ENCODE measurements at regions of chr9 and their contacts with region 1.

Region 1: GRCh38 chr9:15422372-15423230 is at the start of gene SNAPC3:
- DNase-seq: peak; percentile 93 to 95
- ATAC-seq: peak; percentile 99 to 100 (median 100)
- H3K4me3 ChIP-seq: peak within 1 kb of the TSS; percentile 68 to 99 (median 90)
- H3K27ac ChIP-seq: peak within 1 kb of the TSS; percentile 84 to 98 (median 93)
- H3K4me1 ChIP-seq: peaks cover 3 to 50% (median 42%) of the 10 kb centered on the region in 9 donors
- H3K27me3 ChIP-seq: no peaks in the 10 kb centered on the region
- CTCF ChIP-seq: peak in 1 of 9 donors; percentile 4
- total RNA-seq, gene SNAPC3: 26.0 to 41.8 (median 37.5) TPM

Region 2: GRCh38 chr9:15211160-15211814 is 211.3 kb before region 1 on chr9:
- intact Hi-C with region 1: loop called in 7 of 10 experiments (anchors 5 to 10 kb)
- DNase-seq: peak in 1 of 2 donors; percentile 81
- ATAC-seq: peak in 7 of 8 donors; percentile 55 to 83 (median 65)
- H3K4me3 ChIP-seq: no peak overlapping the region
- H3K27ac ChIP-seq: peak overlapping the region in 1 of 10 donors; percentile 22
- H3K4me1 ChIP-seq: peaks cover 0 to 10% (median 7%) of the 10 kb centered on the region in 9 donors
- H3K27me3 ChIP-seq: no peaks in the 10 kb centered on the region
- CTCF ChIP-seq: peak; percentile 80 to 96 (median 92)

Region 3: GRCh38 chr9:15295761-15296405 is 126.7 kb before region 1 on chr9:
- intact Hi-C with region 1: loop called in 2 of 10 experiments (anchors 10 kb)
- DNase-seq: no peak
- ATAC-seq: peak; percentile 25 to 78 (median 59)
- H3K4me3 ChIP-seq: peak overlapping the region in 9 of 10 donors; percentile 29 to 59 (median 48)
- H3K27ac ChIP-seq: peak overlapping the region; percentile 59 to 93 (median 84)
- H3K4me1 ChIP-seq: peaks cover 3 to 54% (median 16%) of the 10 kb centered on the region in 9 donors
- H3K27me3 ChIP-seq: no peaks in the 10 kb centered on the region
- CTCF ChIP-seq: no peak

Region 4: GRCh38 chr9:15306757-15307534 is 115.7 kb before region 1 on chr9 and contains the start of gene TTC39B:
- intact Hi-C with region 1: loop called in 4 of 10 experiments (anchors 1 to 10 kb)
- DNase-seq: peak; percentile 93
- ATAC-seq: peak; percentile 98 to 99 (median 98)
- H3K4me3 ChIP-seq: peak within 1 kb of the TSS; percentile 68 to 98 (median 81)
- H3K27ac ChIP-seq: peak within 1 kb of the TSS; percentile 22 to 91 (median 78)
- H3K4me1 ChIP-seq: peaks cover 0 to 24% (median 4%) of the 10 kb centered on the region in 9 donors
- H3K27me3 ChIP-seq: peaks cover 0 to 10% (median 0%) of the 10 kb centered on the region in 7 donors
- CTCF ChIP-seq: peak in 5 of 9 donors; percentile 10 to 41 (median 24)
- total RNA-seq, gene TTC39B: 1.1 to 4.3 (median 1.6) TPM

Region 5: DNA sequence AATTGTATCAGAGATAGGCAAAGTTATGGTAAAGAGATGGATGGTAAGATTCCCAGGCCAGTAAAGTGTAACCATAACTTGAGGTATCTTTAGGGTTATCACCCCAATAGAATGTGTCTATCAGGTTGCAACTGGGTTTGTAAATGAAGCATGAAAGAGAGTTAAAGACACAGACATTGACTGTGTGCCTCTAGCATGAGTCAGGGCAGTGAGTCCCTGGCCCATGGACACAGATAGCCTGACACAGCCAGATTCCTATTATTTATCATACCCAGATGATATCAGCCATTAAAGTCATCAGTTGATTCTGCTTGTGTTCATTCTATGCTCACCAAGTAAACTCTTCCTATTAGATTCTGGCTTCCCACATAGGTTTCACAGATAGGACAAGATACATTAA is 33.4 kb before region 1 on chr9:
- intact Hi-C with region 1: no loop called
- DNase-seq: no peak
- ATAC-seq: no peak
- H3K4me3 ChIP-seq: no peak overlapping the region
- H3K27ac ChIP-seq: no peak overlapping the region
- H3K4me1 ChIP-seq: no peaks in the 10 kb centered on the region
- H3K27me3 ChIP-seq: no peaks in the 10 kb centered on the region
- CTCF ChIP-seq: no peak

Region 6: DNA sequence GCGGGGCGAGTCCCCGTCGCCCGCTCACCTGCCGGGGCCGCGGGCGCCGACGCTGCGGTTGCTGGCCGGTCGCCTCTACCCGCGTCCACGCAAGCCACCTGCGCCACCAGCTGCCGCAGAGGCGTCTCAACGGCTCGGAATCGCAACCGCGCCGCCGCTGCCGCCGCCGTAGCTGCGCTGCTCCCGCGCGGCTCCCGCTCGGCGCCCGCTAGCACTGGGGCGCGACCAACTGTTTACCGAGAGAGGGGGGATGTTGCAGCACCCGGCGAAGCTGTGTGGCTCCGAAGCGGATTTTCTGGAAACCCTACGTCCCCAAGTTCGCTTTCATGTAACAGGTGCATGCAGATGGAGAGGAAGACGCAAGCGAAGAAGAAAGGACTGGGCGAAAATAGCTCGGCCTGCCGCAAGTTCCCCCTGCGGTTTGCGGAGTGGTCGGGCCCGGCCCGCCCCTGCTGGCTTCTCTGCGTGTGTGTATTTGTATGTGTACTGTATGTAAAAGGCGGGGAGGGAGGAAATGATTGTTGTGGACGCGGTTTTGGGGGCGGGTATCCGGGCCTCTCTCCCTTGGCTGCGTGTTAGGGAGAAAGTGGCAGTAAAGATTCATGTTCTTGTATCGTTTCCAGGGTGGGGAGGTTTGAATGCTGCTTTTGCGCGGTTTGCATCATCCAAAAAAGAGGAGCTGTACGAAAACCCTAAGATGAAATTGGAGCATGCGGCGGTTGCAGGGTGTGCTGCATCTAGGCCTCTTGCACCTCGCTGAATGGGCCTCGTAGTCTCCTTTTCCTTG is 88.4 kb after region 1 on chr9 and contains the start of gene PSIP1:
- intact Hi-C with region 1: loop called in 2 of 10 experiments (anchors 5 to 10 kb)
- DNase-seq: peak; percentile 81
- ATAC-seq: peak; percentile 92 to 97 (median 94)
- H3K4me3 ChIP-seq: peak within 1 kb of the TSS; percentile 69 to 98 (median 96)
- H3K27ac ChIP-seq: peak within 1 kb of the TSS; percentile 87 to 98 (median 94)
- H3K4me1 ChIP-seq: peaks cover 0 to 32% (median 18%) of the 10 kb centered on the region in 9 donors
- H3K27me3 ChIP-seq: no peaks in the 10 kb centered on the region
- CTCF ChIP-seq: peak in 2 of 9 donors; percentile 11 to 16
- total RNA-seq, gene PSIP1: 16.3 to 31.7 (median 21.3) TPM

Region 7: DNA sequence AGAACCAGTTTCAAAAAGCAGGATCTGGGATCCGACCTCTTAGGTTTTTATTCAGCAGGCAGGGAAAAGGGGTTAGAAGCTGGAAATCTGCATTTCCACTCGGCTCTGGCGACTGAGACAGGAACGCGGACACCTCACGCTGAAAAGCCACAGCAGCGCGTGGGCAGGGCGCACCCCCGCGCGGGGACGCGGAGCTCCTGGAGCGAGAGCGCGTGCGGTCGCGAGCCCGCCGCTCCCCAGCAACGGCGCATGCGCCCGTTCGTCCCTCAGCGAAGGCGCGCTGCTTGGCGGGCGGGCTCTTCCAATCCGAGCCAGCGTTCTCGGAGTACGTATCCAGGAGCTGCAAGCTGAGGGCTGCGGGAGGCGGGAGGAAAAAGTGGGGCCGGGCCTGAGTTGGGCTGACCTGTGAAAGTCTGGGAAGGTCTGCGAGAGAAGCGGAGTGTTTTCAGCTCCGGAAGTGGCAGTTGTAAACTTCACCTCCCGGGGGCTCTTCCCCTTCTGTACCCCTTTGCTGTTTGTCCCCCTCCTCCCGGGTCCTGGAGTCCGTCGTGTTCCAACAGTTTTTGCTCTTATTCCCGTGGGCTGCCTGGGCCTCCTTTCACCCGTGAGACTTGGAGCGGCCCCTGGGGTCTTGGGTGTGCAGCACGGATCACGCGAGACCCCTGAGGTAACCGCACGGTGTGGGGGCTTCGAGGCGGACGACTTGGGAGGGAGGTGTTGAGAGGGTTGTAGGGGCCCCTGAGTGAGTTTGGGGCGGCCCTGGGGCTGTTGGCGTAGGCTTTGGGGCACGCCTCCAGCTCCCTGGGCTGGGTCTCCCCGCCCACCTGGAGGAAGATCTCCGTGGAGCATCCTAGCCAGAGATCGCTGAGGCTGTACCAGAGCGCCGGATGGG is 130.3 kb after region 1 on chr9 and contains the start of gene CCDC171:
- intact Hi-C with region 1: loop called in 2 of 10 experiments (anchors 1 to 10 kb)
- DNase-seq: peak; percentile 93 to 94
- ATAC-seq: peak; percentile 97 to 99 (median 98)
- H3K4me3 ChIP-seq: peak within 1 kb of the TSS; percentile 48 to 88 (median 76)
- H3K27ac ChIP-seq: peak within 1 kb of the TSS in 9 of 10 donors; percentile 76 to 91 (median 85)
- H3K4me1 ChIP-seq: peaks cover 0 to 14% (median 9%) of the 10 kb centered on the region in 9 donors
- H3K27me3 ChIP-seq: no peaks in the 10 kb centered on the region
- CTCF ChIP-seq: no peak
- total RNA-seq, gene CCDC171: 1.2 to 2.4 (median 1.8) TPM

Measured in heart right ventricle (tissue), 16 donors.